Activated CD8-positive, alpha-beta T cell treated with anti-CD3 and anti-CD28 coated beads, Interleukin-2, amount 10 ng/mL, durations not matched to agents 7 days and 5 days (primary cell): ENCODE measurements at regions of chr5 and their contacts with region 1.

Region 1: DNA sequence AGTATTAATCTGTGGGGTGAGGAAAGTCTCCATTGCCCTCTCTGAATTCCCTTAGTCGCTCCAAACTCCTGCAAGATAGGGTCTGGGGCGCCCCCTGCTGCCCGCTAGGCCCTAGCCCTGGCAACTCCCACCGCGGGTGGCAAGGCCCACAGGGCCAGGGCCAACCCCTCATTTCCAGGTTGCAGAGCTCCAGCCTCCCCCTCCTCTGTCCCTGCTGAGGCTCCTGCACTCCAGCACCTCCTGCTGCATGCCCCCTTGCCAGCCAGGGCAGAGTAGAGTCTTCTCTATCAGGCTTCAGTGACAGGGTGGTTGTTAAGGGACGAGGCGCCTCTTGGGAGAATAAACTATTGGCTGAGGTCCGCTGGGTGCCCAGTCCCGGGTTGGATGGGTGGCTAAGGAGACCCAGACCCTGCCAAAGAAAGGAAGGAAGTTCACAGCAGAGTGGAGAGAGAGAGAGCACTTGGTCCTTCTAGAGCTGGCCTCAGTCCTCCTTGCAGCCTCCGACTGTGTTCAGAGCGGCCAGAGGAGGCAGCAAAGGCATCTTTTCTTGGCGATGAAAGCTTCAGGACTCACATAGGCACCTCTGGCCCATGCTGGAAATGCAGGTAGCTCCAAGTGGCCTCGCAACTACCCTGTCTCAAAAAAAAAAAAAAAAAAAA is 45.6 kb downstream of the SAR1B start:
- DNase-seq: peak; percentile 88
- ATAC-seq: peak; percentile 95
- H3K4me3 Mint-ChIP-seq: no peak overlapping the region
- H3K27ac Mint-ChIP-seq: peak overlapping the region; percentile 62
- H3K4me1 Mint-ChIP-seq: peaks cover 17% of the 10 kb centered on the region
- H3K27me3 Mint-ChIP-seq: no peaks in the 10 kb centered on the region

Region 2: DNA sequence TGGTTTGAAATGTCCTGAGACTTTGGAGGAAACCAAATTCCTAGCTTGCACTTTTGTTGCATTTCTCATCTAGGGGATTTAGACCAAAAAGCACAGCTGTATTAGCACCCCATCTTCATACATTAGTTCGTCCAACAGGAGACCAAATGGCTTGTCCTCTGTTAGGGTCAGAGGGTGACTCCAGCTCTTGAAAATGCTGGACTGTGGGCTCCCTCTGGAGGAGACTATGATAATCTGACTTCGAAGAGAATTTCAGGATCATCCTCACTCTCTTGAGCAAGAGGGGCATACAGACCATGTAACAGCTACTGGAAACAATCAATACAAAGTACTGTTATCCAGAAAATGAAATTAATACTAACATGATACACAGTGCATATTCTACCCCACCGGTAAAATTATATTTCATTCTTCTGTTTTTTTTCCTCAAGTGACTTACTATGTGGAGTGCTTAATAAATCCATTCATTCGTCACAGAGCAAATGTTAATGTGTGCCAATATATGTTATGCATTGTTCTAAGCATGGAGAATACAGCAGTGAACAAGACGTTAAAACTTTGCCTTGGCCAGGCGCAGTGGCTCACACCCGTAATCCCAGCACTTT is 297.4 kb before region 1 on chr5:
- CTCF ChIA-PET with region 1: interaction called, 10 read pairs
- POLR2A ChIA-PET with region 1: no interaction called
- DNase-seq: peak; percentile 42
- ATAC-seq: peak; percentile 79
- H3K4me3 Mint-ChIP-seq: no peak overlapping the region
- H3K27ac Mint-ChIP-seq: no peak overlapping the region
- H3K4me1 Mint-ChIP-seq: peaks cover 6% of the 10 kb centered on the region
- H3K27me3 Mint-ChIP-seq: peaks cover 15% of the 10 kb centered on the region

Region 3: GRCh38 chr5:134312796-134313195 is 274.2 kb before region 1 on chr5:
- CTCF ChIA-PET with region 1: interaction called, 15 read pairs
- POLR2A ChIA-PET with region 1: no interaction called
- DNase-seq: no peak
- ATAC-seq: no peak
- H3K4me3 Mint-ChIP-seq: no peak overlapping the region
- H3K27ac Mint-ChIP-seq: no peak overlapping the region
- H3K4me1 Mint-ChIP-seq: peaks cover 7% of the 10 kb centered on the region
- H3K27me3 Mint-ChIP-seq: no peaks in the 10 kb centered on the region

Region 4: GRCh38 chr5:134411546-134412266 is 175.3 kb before region 1 on chr5 and contains the start of gene CDKN2AIPNL:
- CTCF ChIA-PET with region 1: interaction called, 45 read pairs
- POLR2A ChIA-PET with region 1: interaction called, 5 read pairs
- DNase-seq: peak; percentile 92
- ATAC-seq: peak; percentile 100
- H3K4me3 Mint-ChIP-seq: peak within 1 kb of the TSS; percentile 96
- H3K27ac Mint-ChIP-seq: peak within 1 kb of the TSS; percentile 87
- H3K4me1 Mint-ChIP-seq: peaks cover 36% of the 10 kb centered on the region
- H3K27me3 Mint-ChIP-seq: no peaks in the 10 kb centered on the region
- total RNA-seq, gene CDKN2AIPNL: 31.3 to 32.5 TPM

Region 5: GRCh38 chr5:134541736-134542376 is 45.1 kb before region 1 on chr5:
- CTCF ChIA-PET with region 1: interaction called, 23 read pairs
- POLR2A ChIA-PET with region 1: no interaction called
- DNase-seq: no peak
- ATAC-seq: no peak
- H3K4me3 Mint-ChIP-seq: no peak overlapping the region
- H3K27ac Mint-ChIP-seq: no peak overlapping the region
- H3K4me1 Mint-ChIP-seq: peaks cover 45% of the 10 kb centered on the region
- H3K27me3 Mint-ChIP-seq: no peaks in the 10 kb centered on the region

Region 6: DNA sequence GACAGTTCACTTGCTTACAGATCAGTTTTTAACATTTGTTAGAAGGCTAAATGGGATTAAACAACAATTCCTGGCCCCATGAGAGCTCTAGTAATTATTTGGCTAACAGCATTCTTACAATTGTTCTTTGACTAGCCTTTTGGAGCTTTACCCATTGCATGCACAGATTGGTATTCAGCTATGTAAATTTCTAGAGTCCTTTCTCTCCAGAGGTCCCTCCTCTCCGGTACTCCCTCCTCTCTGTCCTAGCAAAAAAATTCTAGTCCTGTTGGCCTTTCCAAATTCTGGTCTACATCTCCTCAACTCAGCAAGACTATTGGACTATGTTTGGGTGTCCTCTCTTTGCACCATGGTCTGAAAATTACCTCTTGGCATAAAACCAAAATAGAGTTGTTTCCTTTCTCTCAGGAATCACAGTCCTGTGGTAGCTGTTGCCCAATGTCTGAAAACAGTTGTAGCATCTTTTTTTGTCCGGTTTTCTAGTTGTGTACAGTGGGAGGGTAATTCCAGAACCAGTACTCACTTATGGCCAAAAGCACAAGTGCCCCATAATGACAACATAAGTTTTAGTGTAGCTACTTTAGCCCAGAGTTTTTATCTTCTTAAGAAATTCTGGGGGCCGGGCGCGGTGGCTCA is 27.6 kb after region 1 on chr5:
- CTCF ChIA-PET with region 1: interaction called, 76 read pairs
- POLR2A ChIA-PET with region 1: interaction called, 3 read pairs
- DNase-seq: no peak
- ATAC-seq: no peak
- H3K4me3 Mint-ChIP-seq: no peak overlapping the region
- H3K27ac Mint-ChIP-seq: no peak overlapping the region
- H3K4me1 Mint-ChIP-seq: peaks cover 1% of the 10 kb centered on the region
- H3K27me3 Mint-ChIP-seq: no peaks in the 10 kb centered on the region

Region 7: GRCh38 chr5:135242021-135242865 is 655.2 kb after region 1 on chr5:
- CTCF ChIA-PET with region 1: no interaction called
- POLR2A ChIA-PET with region 1: no interaction called
- DNase-seq: no peak
- ATAC-seq: no peak
- H3K4me3 Mint-ChIP-seq: no peak overlapping the region
- H3K27ac Mint-ChIP-seq: no peak overlapping the region
- H3K4me1 Mint-ChIP-seq: no peaks in the 10 kb centered on the region
- H3K27me3 Mint-ChIP-seq: peaks cover 4% of the 10 kb centered on the region